GM12878 (cell line): ENCODE measurements at regions of chr2 and their contacts with region 1.

Region 1: DNA sequence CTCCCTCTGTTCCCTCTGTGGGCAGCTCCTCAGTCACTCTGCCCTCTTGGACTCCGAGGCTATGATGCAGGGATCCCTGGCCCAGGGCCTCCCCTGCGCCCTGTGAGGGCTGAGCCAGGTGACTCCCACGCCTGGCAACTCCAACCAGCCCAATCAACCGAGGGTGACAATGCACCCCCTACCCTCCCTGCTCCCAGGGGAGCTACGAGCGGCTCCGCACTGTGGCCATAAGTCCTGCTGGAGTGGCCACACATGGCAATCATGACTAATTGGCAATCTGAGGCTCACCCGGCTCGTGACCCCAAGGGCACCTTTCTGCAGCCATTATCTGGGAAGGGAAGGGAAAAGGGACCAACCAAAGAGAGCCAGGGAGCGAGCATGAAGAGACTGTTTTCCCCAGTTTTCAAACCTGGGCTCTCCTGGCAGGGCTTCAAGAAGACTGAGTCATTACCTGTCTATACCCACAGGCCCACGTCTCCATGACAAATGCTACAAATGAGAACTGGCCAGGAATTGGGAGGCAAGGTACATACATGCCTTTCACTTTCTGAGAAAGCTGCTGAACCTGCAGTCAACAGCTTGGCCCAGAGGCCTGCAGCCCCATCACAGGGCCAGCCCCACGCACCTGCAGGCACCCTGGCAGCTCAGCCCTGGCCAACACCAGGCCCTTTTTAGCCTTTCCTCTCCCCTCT is 45.1 kb downstream of the RPL31 start:
- DNase-seq: no peak
- ATAC-seq: no peak; the same call in 2 of the 3 replicates
- H3K4me3 ChIP-seq: no peak overlapping the region
- H3K27ac ChIP-seq: no peak overlapping the region
- H3K4me1 ChIP-seq: peaks cover 30% of the 10 kb centered on the region
- H3K27me3 ChIP-seq: no peaks in the 10 kb centered on the region
- CTCF ChIP-seq: no peak
- EP300 ChIP-seq: no peak
- POLR2A ChIP-seq: no peak
- RAD21 ChIP-seq: no peak

Region 2: DNA sequence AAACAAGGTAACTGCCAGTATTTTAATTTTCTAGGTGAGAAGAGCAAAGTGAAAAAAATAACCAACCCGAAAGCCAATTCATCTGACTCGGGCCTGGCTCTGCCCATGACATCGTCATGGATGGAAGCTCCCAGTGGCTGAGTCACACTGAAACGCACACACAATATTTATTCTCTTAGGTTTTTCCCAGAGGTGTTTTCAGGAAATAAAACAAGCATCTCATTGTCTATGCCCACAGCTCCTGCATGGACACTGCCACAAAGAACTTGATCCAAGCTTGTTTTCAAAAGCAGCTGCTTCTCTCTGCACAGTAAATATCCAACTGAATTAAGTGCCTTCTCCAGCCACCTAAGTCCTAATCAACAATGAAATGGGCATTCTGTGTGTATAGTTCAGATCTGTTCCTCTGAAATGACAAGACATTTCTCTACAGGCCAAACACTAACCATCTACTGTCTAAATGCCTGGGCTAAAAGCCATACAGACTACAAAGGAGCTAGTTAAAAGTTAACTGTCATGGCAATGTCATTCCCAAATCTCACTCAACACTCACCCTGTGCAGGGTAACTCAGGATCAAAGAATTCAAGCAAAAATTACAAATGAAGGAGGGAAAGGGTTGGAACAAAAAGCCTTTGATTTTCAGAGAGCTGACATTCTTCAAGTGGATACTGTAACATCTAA is 17.8 kb after region 1 on chr2:
- CTCF ChIA-PET with region 1: interaction called, 5 read pairs
- POLR2A ChIA-PET with region 1: interaction called, 15 read pairs
- RAD21 ChIA-PET with region 1: interaction called, 5 read pairs
- SMC1A ChIA-PET with region 1: interaction called, 4 read pairs
- in situ Hi-C with region 1: no loop called
- intact Hi-C with region 1: loop called (anchors 2 kb)
- DNase-seq: no peak
- ATAC-seq: peak; percentile 91
- H3K4me3 ChIP-seq: no peak overlapping the region
- H3K27ac ChIP-seq: peak overlapping the region; percentile 53
- H3K4me1 ChIP-seq: peaks cover 11% of the 10 kb centered on the region
- H3K27me3 ChIP-seq: no peaks in the 10 kb centered on the region
- CTCF ChIP-seq: no peak
- EP300 ChIP-seq: peak in 1 of 2 experiments; percentile 35; a peak in 2 of 4 replicates
- POLR2A ChIP-seq: no peak
- RAD21 ChIP-seq: no peak